Lower leg skin (tissue), 4 donors: ENCODE measurements at regions of chr19 and their contacts with region 1.

Region 1: DNA sequence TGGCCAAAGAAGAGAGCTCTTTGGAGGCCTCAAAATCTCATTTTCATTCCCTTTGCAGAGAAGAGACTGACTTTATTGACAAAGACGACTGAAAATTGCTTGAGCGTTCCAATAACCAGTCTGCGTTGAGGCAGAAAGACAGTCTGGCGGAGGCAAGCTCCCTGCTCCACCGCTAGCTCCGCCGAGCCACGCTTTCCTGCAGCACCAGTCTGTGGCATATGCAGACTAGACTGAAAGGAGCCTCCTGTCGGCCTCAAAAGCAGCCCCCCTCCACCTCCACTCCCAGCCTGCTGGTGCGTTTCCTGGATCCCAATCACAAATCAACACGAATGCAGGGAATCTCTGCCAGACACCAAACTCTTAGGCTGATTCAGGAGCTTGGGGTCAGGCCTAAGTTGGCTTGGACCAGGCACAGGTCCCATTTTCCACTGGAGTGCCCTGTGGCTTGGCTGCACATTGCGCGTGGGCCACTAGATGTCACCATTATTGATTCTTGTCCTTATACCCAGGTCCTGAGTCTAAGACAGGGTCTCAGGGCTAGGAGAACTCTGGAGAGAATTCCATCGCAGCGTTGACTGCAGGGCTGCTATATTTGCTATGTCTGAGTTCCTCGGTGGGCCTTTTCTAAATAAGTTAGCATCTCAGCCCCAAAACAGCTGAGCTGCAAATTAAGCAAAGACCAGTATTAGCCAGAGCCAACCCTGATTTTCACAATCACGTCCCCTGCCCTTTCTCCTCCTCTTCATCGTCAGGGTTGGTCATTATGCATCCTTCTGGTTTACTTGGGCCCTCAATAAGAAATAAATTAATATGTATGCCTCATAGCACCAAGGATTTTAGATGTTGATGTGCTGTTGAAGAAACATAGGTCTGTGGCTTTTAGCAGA is 5.2 kb upstream of the ZNF507 start:
- DNase-seq: peak in 1 of 2 donors; percentile 32
- H3K4me3 ChIP-seq: no peak overlapping the region
- CTCF ChIP-seq: no peak
- POLR2A ChIP-seq: no peak

Region 2: GRCh38 chr19:32296694-32297093 is 43.5 kb before region 1 on chr19:
- intact Hi-C with region 1: no loop called
- DNase-seq: no peak
- H3K4me3 ChIP-seq: no peak overlapping the region
- CTCF ChIP-seq: no peak
- POLR2A ChIP-seq: no peak

Region 3: GRCh38 chr19:34134190-34135053 is 1794.2 kb after region 1 on chr19:
- intact Hi-C with region 1: loop called (anchors 10 kb)
- DNase-seq: peak; percentile 73 to 96
- H3K4me3 ChIP-seq: peak overlapping the region; percentile 36
- CTCF ChIP-seq: no peak
- POLR2A ChIP-seq: no peak